Mucosa of descending colon (tissue), 3 donors: ENCODE measurements at regions of chr3 and their contacts with region 1.

Region 1: DNA sequence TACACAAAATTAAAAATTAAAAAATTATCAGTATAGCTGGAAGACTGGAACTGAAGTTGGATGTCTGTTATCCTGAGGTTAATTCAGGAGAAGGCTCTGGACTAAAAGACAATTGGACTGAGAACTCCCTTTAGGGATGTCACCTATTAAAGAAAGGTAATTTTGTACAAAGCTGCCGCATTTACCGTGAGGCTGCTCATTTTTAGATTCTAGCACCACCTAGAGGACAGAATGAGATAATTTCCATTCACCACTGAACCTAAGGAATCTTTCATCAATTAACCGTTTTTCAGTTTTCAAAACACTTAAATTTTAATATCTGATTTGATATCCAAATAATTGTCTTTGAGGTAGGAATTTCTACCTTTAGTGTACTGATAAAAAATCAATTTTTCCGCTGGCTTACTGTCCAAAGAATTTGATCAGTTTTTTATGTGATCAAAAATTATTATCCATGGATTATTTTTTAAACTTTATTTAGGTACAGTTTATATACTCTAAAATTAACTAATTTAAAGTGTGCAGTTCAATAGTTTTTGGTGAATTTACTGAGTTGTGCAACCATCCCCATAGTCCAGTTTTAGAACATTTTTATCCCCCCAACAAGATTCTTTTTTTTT is 106.7 kb upstream of the TNIK start:
- DNase-seq: peak in 1 of 3 donors; percentile 17
- ATAC-seq: peak; percentile 55
- H3K4me3 ChIP-seq: no peak overlapping the region
- H3K4me1 ChIP-seq: no peaks in the 10 kb centered on the region
- CTCF ChIP-seq: no peak

Region 2: GRCh38 chr3:170961616-170962400 is 605.1 kb before region 1 on chr3:
- intact Hi-C with region 1: loop called (anchors 5 kb)
- DNase-seq: peak in 1 of 3 donors; percentile 49
- ATAC-seq: peak; percentile 22
- H3K4me3 ChIP-seq: no peak overlapping the region
- H3K4me1 ChIP-seq: no peaks in the 10 kb centered on the region
- CTCF ChIP-seq: peak; percentile 22

Region 3: GRCh38 chr3:171049861-171050444 is 517.0 kb before region 1 on chr3:
- intact Hi-C with region 1: loop called in 1 of 2 experiments (anchors 10 kb)
- DNase-seq: peak in 2 of 3 donors; percentile 39 to 52
- ATAC-seq: peak; percentile 83
- H3K4me3 ChIP-seq: no peak overlapping the region
- H3K4me1 ChIP-seq: no peaks in the 10 kb centered on the region
- CTCF ChIP-seq: peak; percentile 37

Region 4: GRCh38 chr3:171187706-171188290 is 379.1 kb before region 1 on chr3:
- intact Hi-C with region 1: loop called in 1 of 2 experiments (anchors 10 kb)
- DNase-seq: peak in 1 of 3 donors; percentile 34
- ATAC-seq: peak; percentile 69
- H3K4me3 ChIP-seq: no peak overlapping the region
- H3K4me1 ChIP-seq: no peaks in the 10 kb centered on the region
- CTCF ChIP-seq: peak; percentile 25

Region 5: GRCh38 chr3:171407759-171408158 is 159.2 kb before region 1 on chr3:
- intact Hi-C with region 1: no loop called
- DNase-seq: no peak
- ATAC-seq: no peak
- H3K4me3 ChIP-seq: no peak overlapping the region
- H3K4me1 ChIP-seq: peaks cover 5% of the 10 kb centered on the region
- CTCF ChIP-seq: no peak